T-cell (primary cell): ENCODE measurements at regions of chr1 and their contacts with region 1.

Region 1: DNA sequence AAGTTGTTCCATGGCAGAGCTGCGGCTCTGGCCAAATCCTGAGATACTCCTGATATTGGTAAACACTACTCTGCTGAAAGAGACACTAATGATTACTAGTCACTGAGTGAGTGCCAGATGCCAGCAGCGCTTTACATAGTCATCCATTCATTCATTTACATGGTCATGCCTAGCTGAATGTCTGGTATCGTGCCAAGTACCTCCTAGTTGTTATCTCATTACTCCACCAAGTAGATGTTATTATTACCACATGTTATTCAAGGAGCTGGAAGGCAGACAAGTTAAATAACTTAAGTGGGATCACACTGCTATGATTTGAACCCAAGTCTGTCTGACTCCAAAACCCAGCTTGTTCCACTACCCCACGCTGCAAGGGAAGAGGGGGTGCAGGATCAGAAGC is 4.7 kb downstream of the OLFML2B start:
- DNase-seq: no peak
- ATAC-seq: no peak
- H3K4me3 ChIP-seq: no peak overlapping the region
- H3K4me3 Mint-ChIP-seq: no peak overlapping the region
- H3K27ac ChIP-seq: no peak overlapping the region
- H3K27ac Mint-ChIP-seq: no peak overlapping the region
- H3K4me1 ChIP-seq: peaks cover 0 to 6% of the 10 kb centered on the region in 2 experiments
- H3K4me1 Mint-ChIP-seq: peaks cover 8 to 10% (median 10%) of the 10 kb centered on the region in 3 donors
- H3K27me3 ChIP-seq: peaks cover 0 to 13% of the 10 kb centered on the region in 2 experiments
- H3K27me3 Mint-ChIP-seq: peaks cover 4 to 18% of the 10 kb centered on the region in 2 donors

Region 2: GRCh38 chr1:162069328-162070093 is 50.5 kb after region 1 on chr1 and contains the start of gene NOS1AP:
- CTCF ChIA-PET with region 1: no interaction called
- POLR2A ChIA-PET with region 1: interaction called in 1 of 2 experiments, 11 read pairs
- DNase-seq: peak; percentile 44 to 84 (median 67)
- ATAC-seq: peak; percentile 99 to 100 (median 99)
- H3K4me3 ChIP-seq: peak within 1 kb of the TSS; percentile 31 to 80
- H3K4me3 Mint-ChIP-seq: peak within 1 kb of the TSS; percentile 77 to 81 (median 78)
- H3K27ac ChIP-seq: no peak within 1 kb of the TSS
- H3K27ac Mint-ChIP-seq: no peak within 1 kb of the TSS
- H3K4me1 ChIP-seq: peaks cover 4 to 10% of the 10 kb centered on the region in 2 experiments
- H3K4me1 Mint-ChIP-seq: peaks cover 4 to 12% (median 6%) of the 10 kb centered on the region in 3 donors
- H3K27me3 ChIP-seq: peaks cover 2 to 32% of the 10 kb centered on the region in 2 experiments
- H3K27me3 Mint-ChIP-seq: peaks cover 43 to 73% of the 10 kb centered on the region in 2 donors
- total RNA-seq, gene NOS1AP: 0.07 to 0.16 (median 0.09) TPM in 3 of 5 donors, not detected in the others